IMR-90 (cell line): ENCODE measurements at regions of chr11 and their contacts with region 1.

Region 1: DNA sequence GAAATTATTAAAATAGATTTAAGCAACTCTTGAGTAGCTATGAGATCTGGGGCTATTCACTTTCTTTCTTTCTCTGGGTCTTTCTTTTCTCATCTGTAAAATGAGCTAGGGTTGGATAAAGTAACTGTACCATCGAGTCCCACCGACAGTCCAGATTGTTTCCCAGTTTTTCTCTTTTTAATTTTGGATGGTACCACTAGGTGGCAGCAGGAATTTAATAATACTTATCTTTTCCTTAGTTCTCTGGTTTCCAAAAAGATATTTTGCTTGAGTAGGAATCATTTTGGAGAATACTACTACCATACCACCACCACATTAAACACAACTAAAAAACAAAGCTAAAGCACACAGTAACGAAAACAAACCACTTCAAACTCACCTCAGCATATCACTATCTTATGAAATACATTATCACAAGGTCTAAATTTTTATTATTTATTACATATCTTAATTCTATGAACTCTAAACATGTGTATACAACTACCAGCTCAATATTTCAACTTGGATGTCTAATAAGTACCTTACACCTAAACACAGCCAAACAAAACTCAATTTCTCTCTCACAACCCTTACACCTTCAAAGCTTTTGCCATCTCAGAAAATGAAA is 584.0 kb downstream of the KCNA4 start:
- DNase-seq: peak; percentile 6
- ATAC-seq: peak; percentile 67
- H3K4me3 ChIP-seq: no peak overlapping the region
- H3K27ac ChIP-seq: no peak overlapping the region
- H3K4me1 ChIP-seq: no peaks in the 10 kb centered on the region
- H3K27me3 ChIP-seq: no peaks in the 10 kb centered on the region
- CTCF ChIP-seq: peak; percentile 56
- POLR2A ChIP-seq: no peak
- RAD21 ChIP-seq: peak; percentile 40

Region 2: DNA sequence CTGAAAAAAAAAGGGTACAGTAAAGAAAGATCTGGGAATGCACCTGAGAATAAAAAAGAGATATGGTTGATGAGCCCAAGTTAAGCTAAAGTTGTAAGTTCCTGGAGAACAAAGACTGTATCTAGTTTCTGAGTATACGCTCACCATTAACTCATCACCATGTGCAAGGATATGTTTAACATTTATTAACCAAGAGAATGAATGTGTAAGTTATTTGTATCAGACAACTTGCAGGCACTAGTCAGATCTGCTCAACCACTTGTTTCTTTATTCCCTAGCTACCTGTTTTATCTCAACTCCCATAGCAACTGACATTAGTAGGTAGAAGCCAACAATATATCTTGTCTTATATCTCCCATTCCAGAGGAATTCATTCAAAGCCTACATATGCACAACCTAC is 658.9 kb after region 1 on chr11:
- CTCF ChIA-PET with region 1: no interaction called
- POLR2A ChIA-PET with region 1: no interaction called
- dilution Hi-C with region 1: no loop called
- in situ Hi-C with region 1: no loop called
- intact Hi-C with region 1: no loop called
- DNase-seq: no peak
- ATAC-seq: no peak
- H3K4me3 ChIP-seq: no peak overlapping the region
- H3K27ac ChIP-seq: no peak overlapping the region
- H3K4me1 ChIP-seq: no peaks in the 10 kb centered on the region
- H3K27me3 ChIP-seq: no peaks in the 10 kb centered on the region
- CTCF ChIP-seq: no peak
- POLR2A ChIP-seq: no peak
- RAD21 ChIP-seq: no peak

Region 3: DNA sequence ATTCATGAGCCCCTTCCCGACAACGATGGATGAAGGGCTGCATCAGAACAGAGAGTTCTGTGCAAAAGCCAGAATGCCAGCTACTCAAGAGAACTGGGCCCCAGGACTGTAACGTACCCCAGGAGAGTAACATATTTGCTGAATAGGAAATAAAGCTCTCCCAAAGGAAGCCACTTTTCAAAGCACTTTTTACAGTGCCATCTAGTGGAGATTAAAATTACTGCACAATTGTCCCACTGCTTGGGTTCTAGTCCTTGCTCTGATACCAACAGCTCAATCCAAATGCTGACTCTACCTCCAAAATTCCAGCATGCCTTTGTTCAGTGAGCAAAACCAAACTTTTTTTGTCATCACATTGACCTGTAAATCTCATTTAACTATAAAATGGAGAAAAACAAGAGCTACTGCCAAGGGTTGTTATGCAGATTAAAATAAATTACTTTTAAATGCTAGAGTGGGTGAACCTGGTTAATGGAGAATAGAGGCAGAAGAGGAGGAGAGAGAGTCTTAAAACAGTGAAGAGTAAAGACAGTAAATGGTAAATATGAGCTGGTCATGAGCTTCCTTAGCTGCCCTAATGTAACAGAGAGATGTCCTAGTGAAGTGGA is 710.4 kb after region 1 on chr11:
- CTCF ChIA-PET with region 1: interaction called, 12 read pairs
- POLR2A ChIA-PET with region 1: no interaction called
- dilution Hi-C with region 1: no loop called
- in situ Hi-C with region 1: loop called (anchors 25 kb)
- intact Hi-C with region 1: loop called (anchors 1 kb)
- DNase-seq: peak; percentile 15
- ATAC-seq: peak; percentile 83
- H3K4me3 ChIP-seq: no peak overlapping the region
- H3K27ac ChIP-seq: no peak overlapping the region
- H3K4me1 ChIP-seq: no peaks in the 10 kb centered on the region
- H3K27me3 ChIP-seq: no peaks in the 10 kb centered on the region
- CTCF ChIP-seq: peak; percentile 59
- POLR2A ChIP-seq: no peak
- RAD21 ChIP-seq: peak; percentile 40

Region 4: DNA sequence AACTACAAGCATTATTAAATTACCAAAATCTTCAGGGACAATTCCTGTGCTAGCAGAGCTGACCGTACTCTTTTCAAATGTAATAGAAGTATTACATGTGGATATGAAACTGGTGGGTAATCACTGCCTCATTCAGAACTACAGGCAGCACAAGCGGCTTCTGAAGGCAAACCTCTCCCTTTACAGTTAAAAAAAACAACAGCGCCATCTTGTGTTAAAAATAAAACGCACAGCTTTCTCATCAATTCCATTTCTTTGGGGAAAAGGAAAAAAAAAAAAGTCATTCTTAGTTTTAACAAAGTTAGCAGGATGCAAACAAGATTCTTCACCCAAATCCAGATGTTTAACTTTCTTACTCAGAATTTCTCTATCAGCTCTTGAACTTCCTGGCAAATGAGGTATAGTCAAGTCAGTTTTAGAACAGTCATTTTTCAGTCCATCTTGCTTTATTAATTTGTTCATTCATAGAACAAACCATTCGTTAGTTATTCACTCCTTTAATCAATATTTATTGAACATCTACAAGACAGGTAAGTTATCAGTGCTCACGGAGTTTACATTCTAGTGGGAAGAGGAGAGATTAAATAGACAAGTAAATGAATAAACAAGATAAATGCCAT is 1485.1 kb after region 1 on chr11:
- CTCF ChIA-PET with region 1: no interaction called
- POLR2A ChIA-PET with region 1: no interaction called
- dilution Hi-C with region 1: no loop called
- in situ Hi-C with region 1: no loop called
- intact Hi-C with region 1: loop called (anchors 5 kb)
- DNase-seq: peak; percentile 42
- ATAC-seq: peak; percentile 56; the same call in 1 of the 2 replicates
- H3K4me3 ChIP-seq: no peak overlapping the region
- H3K27ac ChIP-seq: no peak overlapping the region
- H3K4me1 ChIP-seq: no peaks in the 10 kb centered on the region
- H3K27me3 ChIP-seq: no peaks in the 10 kb centered on the region
- CTCF ChIP-seq: peak; percentile 71
- POLR2A ChIP-seq: no peak
- RAD21 ChIP-seq: peak; percentile 60